ENCODE measurements at regions of chr15 and their contacts with region 1.

Region 1: GRCh38 chr15:84035399-84035766 is 200.2 kb upstream of the GOLGA6L4 start:
- DNase-seq: peak; percentile 51
- H3K4me3 Mint-ChIP-seq: no peak overlapping the region
- H3K27ac Mint-ChIP-seq: no peak overlapping the region
- H3K4me1 Mint-ChIP-seq: no peaks in the 10 kb centered on the region
- H3K27me3 Mint-ChIP-seq: no peaks in the 10 kb centered on the region
- CTCF ChIP-seq: peak; percentile 33

Region 2: GRCh38 chr15:83248151-83249029 is 787.0 kb before region 1 on chr15:
- CTCF ChIA-PET with region 1: interaction called, 4 read pairs
- POLR2A ChIA-PET with region 1: no interaction called
- intact Hi-C with region 1: loop called (anchors 10 kb)
- DNase-seq: peak; percentile 72
- H3K4me3 Mint-ChIP-seq: no peak overlapping the region
- H3K27ac Mint-ChIP-seq: no peak overlapping the region
- H3K4me1 Mint-ChIP-seq: peaks cover 26% of the 10 kb centered on the region
- H3K27me3 Mint-ChIP-seq: no peaks in the 10 kb centered on the region
- CTCF ChIP-seq: peak; percentile 91

Region 3: GRCh38 chr15:83559310-83559966 is 475.9 kb before region 1 on chr15:
- CTCF ChIA-PET with region 1: interaction called, 37 read pairs
- POLR2A ChIA-PET with region 1: no interaction called
- intact Hi-C with region 1: loop called (anchors 2 kb)
- DNase-seq: peak; percentile 88
- H3K4me3 Mint-ChIP-seq: no peak overlapping the region
- H3K27ac Mint-ChIP-seq: no peak overlapping the region
- H3K4me1 Mint-ChIP-seq: peaks cover 6% of the 10 kb centered on the region
- H3K27me3 Mint-ChIP-seq: no peaks in the 10 kb centered on the region
- CTCF ChIP-seq: peak; percentile 79

Region 4: GRCh38 chr15:83571820-83572707 is 463.3 kb before region 1 on chr15:
- CTCF ChIA-PET with region 1: interaction called, 68 read pairs
- POLR2A ChIA-PET with region 1: no interaction called
- intact Hi-C with region 1: loop called (anchors 1 kb)
- DNase-seq: peak; percentile 43
- H3K4me3 Mint-ChIP-seq: no peak overlapping the region
- H3K27ac Mint-ChIP-seq: no peak overlapping the region
- H3K4me1 Mint-ChIP-seq: peaks cover 7% of the 10 kb centered on the region
- H3K27me3 Mint-ChIP-seq: no peaks in the 10 kb centered on the region
- CTCF ChIP-seq: peak; percentile 64

Region 5: DNA sequence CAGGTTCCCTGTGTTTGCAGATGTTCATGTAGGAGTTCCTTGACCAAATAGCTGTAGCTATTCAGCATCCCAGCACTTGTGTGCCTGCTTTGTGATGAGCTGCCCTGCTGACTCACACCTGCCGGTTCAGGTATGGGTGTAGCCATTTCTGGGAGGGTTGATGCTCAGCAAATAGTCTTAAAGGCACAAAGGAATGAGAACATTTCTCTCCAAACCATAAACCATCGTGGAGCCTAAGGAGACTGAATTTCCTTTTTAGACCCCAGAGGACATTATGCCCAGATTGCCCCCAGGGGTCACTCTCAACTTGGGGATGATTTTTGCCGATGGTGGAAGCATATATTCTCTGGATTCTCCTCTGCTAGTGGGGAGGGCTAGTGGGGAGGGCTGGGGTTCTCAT is 300.9 kb before region 1 on chr15:
- CTCF ChIA-PET with region 1: interaction called, 9 read pairs
- POLR2A ChIA-PET with region 1: no interaction called
- intact Hi-C with region 1: loop called (anchors 1 kb)
- DNase-seq: peak; percentile 55
- H3K4me3 Mint-ChIP-seq: no peak overlapping the region
- H3K27ac Mint-ChIP-seq: peak overlapping the region; percentile 70
- H3K4me1 Mint-ChIP-seq: peaks cover 21% of the 10 kb centered on the region
- H3K27me3 Mint-ChIP-seq: no peaks in the 10 kb centered on the region
- CTCF ChIP-seq: peak; percentile 24

Region 6: GRCh38 chr15:83955806-83956265 is 79.5 kb before region 1 on chr15:
- CTCF ChIA-PET with region 1: no interaction called
- POLR2A ChIA-PET with region 1: no interaction called
- intact Hi-C with region 1: no loop called
- DNase-seq: no peak
- H3K4me3 Mint-ChIP-seq: no peak overlapping the region
- H3K27ac Mint-ChIP-seq: no peak overlapping the region
- H3K4me1 Mint-ChIP-seq: no peaks in the 10 kb centered on the region
- H3K27me3 Mint-ChIP-seq: no peaks in the 10 kb centered on the region
- CTCF ChIP-seq: no peak

Region 7: DNA sequence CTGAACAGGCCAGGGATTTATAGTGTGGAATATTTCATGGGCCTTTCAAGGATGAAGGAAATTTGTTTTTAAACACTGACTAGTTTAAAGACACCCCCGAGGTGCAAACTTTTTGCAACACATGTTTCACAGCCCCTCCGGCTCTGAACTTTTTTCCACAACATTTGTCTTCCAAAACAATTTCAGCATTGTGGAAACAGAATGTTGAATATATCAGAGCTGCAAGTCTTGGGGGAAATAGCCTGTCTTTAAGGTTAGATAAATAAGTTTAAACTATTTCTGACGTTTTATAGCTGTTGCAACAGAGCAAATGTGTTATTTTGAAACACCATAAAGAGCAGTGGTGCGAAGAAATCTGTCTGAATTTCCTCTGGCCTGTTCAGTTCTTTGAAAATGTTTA is 29.0 kb before region 1 on chr15:
- CTCF ChIA-PET with region 1: interaction called, 12 read pairs
- POLR2A ChIA-PET with region 1: interaction called, 5 read pairs
- intact Hi-C with region 1: no loop called
- DNase-seq: no peak
- H3K4me3 Mint-ChIP-seq: no peak overlapping the region
- H3K27ac Mint-ChIP-seq: no peak overlapping the region
- H3K4me1 Mint-ChIP-seq: peaks cover 1% of the 10 kb centered on the region
- H3K27me3 Mint-ChIP-seq: no peaks in the 10 kb centered on the region
- CTCF ChIP-seq: no peak

Region 8: DNA sequence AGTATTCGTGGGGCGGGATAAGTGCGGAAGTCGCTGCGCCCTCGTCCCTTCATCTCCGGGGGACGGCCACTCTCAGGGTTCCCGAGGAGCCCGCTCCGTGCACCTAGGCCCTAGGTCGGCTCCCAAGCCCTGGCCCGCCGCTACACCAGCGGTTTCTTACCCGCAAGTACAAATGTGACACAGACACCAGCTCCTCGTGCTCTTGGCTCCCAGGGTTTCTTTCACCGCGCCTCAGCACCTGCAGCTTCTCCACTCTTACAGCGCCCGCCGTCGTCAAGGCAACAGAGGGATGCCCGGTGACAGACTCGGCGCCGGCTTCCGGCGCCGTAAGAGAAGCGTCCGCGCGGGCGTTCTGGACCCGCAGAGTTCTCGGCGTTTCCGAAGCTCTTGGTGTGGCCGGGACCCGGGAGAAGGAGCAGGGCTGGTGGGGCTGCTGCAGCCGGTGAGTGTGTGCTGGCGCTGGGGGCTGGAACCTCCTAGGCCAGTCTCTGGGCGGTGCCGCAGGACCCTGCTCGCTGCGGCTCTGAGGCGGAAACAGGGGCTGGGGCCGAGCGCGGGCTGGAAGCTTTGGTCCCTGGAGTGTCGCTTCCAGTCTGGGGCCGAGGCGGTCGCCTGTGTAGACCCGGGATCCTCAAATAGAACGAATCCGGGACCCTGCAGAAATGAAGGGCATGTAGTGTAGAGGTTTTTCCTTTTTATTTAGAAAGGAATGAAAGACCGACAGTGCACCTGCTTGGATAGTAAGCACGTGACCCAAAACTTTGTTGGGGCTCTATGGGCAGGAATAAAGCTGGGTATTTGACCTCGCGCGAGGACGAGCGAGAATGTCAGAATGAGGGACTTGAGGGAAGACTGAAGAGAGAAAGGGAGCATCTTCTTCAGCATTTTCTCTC is 44.7 kb after region 1 on chr15:
- CTCF ChIA-PET with region 1: no interaction called
- POLR2A ChIA-PET with region 1: no interaction called
- intact Hi-C with region 1: no loop called
- DNase-seq: no peak
- H3K4me3 Mint-ChIP-seq: no peak overlapping the region
- H3K27ac Mint-ChIP-seq: no peak overlapping the region
- H3K4me1 Mint-ChIP-seq: peaks cover 13% of the 10 kb centered on the region
- H3K27me3 Mint-ChIP-seq: no peaks in the 10 kb centered on the region
- CTCF ChIP-seq: no peak

Region 9: DNA sequence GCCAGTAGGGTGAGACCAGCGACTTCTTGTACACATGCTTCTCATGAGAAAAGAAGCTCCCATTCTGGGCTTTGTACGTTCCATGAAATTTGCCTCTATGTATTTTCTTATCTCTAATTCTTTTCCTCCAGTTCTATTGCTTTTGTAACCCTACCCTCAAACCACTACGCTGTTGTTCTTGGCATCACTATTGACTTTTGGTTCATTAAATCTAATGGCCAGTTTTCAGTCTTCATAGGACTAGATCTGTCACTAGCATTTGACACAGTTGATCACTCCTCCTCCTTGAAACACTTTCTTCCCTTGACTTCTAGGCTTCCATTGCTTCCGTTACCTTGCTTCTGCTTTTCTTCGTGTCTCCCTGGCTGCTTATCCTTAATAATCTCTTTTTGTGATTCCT is 78.5 kb after region 1 on chr15:
- CTCF ChIA-PET with region 1: no interaction called
- POLR2A ChIA-PET with region 1: no interaction called
- intact Hi-C with region 1: no loop called
- DNase-seq: no peak
- H3K4me3 Mint-ChIP-seq: no peak overlapping the region
- H3K27ac Mint-ChIP-seq: no peak overlapping the region
- H3K4me1 Mint-ChIP-seq: peaks cover 6% of the 10 kb centered on the region
- H3K27me3 Mint-ChIP-seq: no peaks in the 10 kb centered on the region
- CTCF ChIP-seq: no peak

Measured in MCF 10A (cell line).